Endothelial cell of umbilical vein (primary cell): ENCODE measurements at regions of chr9 and their contacts with region 1.

Region 1: DNA sequence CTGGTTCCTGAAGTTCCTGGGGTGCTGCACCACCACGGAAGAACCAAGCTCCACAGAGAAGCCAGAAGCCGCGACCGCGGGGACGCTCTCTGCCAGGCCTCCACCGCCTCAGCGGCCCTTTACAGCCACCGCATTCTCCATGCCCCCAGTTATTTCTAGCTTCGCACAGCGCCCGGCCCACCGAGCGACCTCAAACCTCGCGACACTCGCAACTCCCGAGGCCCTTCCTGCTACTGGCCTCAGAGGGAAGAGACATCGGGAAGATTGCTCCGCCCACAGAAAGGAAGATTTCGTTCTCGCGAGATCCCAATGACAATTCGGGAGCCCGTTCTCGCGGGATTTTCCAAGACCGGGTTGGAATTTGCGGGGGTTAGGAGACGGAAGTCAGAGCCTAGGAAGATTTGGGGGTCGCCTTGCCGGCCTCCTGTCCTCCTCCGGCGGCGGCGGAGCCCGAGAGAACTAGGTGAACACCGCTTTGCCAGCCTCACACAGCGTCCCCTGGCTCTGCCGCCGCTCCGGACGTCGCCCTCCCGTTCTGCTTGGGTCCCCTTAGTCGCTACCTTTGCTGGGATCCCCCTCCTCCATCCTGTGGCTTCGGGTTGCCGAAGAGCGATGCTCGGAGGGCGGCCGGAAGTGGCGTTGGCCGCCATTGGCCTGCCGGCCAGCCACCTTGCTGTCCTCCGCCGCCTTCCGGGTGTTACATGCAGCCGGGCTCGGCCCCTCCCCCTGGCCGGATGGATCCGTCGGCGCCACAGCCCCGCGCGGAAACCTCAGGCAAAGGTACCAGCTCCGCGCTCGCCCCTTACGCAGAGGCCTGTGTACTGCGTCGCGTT is at the start of gene ERCC6L2:
- DNase-seq: peak; percentile 99
- H3K4me3 ChIP-seq: peak within 1 kb of the TSS in 1 of 3 experiments; percentile 71
- H3K27ac ChIP-seq: no peak within 1 kb of the TSS
- H3K4me1 ChIP-seq: peaks cover 23% of the 10 kb centered on the region
- H3K27me3 ChIP-seq: no peaks in the 10 kb centered on the region
- CTCF ChIP-seq: peak in 1 of 2 donors; percentile 0
- POLR2A ChIP-seq: peak; percentile 86
- total RNA-seq, gene ERCC6L2: 29.6 and 31.8 TPM in 2 replicates

Region 2: GRCh38 chr9:95181226-95181818 is 694.2 kb before region 1 on chr9:
- CTCF ChIA-PET with region 1: no interaction called
- POLR2A ChIA-PET with region 1: no interaction called
- dilution Hi-C with region 1: no loop called
- intact Hi-C with region 1: loop called (anchors 10 kb)
- DNase-seq: peak; percentile 38
- H3K4me3 ChIP-seq: no peak overlapping the region
- H3K27ac ChIP-seq: no peak overlapping the region
- H3K4me1 ChIP-seq: no peaks in the 10 kb centered on the region
- H3K27me3 ChIP-seq: no peaks in the 10 kb centered on the region
- CTCF ChIP-seq: peak; percentile 4 to 15
- POLR2A ChIP-seq: no peak

Region 3: DNA sequence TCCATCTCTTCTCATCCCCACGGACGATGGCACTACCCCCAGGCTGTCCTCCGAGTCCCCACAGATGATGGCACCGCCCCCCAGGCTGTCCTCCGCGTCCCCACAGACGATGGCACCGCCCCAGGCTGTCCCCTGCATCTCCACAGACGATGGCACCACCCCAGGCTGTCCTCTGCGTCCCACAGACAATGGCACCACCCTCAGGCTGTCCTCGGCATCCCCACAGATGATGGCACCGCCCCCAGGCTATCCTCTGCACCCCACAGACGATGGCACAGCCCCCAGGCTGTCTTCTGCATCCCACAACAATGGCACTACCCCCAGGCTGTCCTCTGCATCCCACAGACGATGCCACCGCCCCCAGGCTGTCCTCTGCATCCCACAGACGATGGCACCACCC is 301.3 kb before region 1 on chr9:
- CTCF ChIA-PET with region 1: no interaction called
- POLR2A ChIA-PET with region 1: no interaction called
- dilution Hi-C with region 1: no loop called
- intact Hi-C with region 1: loop called (anchors 5 kb)
- DNase-seq: no peak
- H3K4me3 ChIP-seq: no peak overlapping the region
- H3K27ac ChIP-seq: no peak overlapping the region
- H3K4me1 ChIP-seq: peaks cover 14% of the 10 kb centered on the region
- H3K27me3 ChIP-seq: peaks cover 2 to 5% of the 10 kb centered on the region in 2 experiments
- CTCF ChIP-seq: no peak
- POLR2A ChIP-seq: no peak

Region 4: GRCh38 chr9:95736370-95736769 is 139.2 kb before region 1 on chr9:
- CTCF ChIA-PET with region 1: interaction called, 10 read pairs
- POLR2A ChIA-PET with region 1: no interaction called
- dilution Hi-C with region 1: no loop called
- intact Hi-C with region 1: no loop called
- DNase-seq: no peak
- H3K4me3 ChIP-seq: no peak overlapping the region
- H3K27ac ChIP-seq: no peak overlapping the region
- H3K4me1 ChIP-seq: no peaks in the 10 kb centered on the region
- H3K27me3 ChIP-seq: no peaks in the 10 kb centered on the region
- CTCF ChIP-seq: peak; percentile 27 to 43
- POLR2A ChIP-seq: no peak

Region 5: DNA sequence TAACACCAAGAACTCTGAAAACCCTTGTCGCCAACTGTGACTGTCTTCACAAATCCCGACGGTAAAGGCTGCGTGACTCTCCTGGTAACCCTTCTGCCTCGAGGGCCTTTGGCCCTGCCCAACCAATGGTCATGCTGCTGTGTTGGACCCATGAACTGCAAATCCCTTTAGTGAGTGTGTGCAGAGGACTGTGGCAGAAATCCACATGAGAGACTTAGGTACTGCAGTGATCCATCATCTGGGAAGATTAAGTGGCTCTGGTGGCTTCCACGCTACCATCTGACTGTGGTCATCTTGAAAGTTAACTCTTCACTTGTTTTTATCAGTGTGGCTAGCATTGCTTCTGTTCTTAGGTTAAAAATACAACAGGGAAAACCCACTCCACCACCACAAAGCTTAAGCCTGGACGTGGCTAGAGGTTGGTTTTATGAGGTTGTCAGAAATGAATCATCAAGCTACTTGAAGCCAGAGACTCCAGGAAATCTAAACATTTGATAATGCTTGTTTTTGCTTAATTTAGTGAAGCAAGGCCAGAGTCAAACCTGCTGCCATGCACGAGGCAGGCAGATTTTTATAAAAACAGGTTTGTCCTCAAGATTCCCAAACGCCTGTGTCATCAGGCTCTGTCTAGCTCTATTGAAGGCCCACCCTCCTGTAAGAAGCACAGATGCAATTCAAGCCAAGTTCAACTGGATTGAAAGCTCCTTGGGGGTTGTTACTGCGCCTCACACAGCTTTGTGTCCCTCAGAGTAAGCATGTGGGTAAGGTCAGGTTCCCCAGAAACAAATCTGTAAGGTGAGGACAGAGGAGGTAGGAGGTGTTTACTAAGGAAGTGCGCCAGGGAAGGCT is 52.7 kb before region 1 on chr9:
- CTCF ChIA-PET with region 1: interaction called, 4 read pairs
- POLR2A ChIA-PET with region 1: no interaction called
- dilution Hi-C with region 1: no loop called
- intact Hi-C with region 1: loop called (anchors 1 kb)
- DNase-seq: peak; percentile 79
- H3K4me3 ChIP-seq: no peak overlapping the region
- H3K27ac ChIP-seq: peak overlapping the region; percentile 27
- H3K4me1 ChIP-seq: peaks cover 25% of the 10 kb centered on the region
- H3K27me3 ChIP-seq: no peaks in the 10 kb centered on the region
- CTCF ChIP-seq: no peak
- POLR2A ChIP-seq: no peak

Region 6: GRCh38 chr9:96009690-96010472 is 134.4 kb after region 1 on chr9:
- CTCF ChIA-PET with region 1: no interaction called
- POLR2A ChIA-PET with region 1: no interaction called
- dilution Hi-C with region 1: no loop called
- intact Hi-C with region 1: no loop called
- DNase-seq: no peak
- H3K4me3 ChIP-seq: no peak overlapping the region
- H3K27ac ChIP-seq: no peak overlapping the region
- H3K4me1 ChIP-seq: no peaks in the 10 kb centered on the region
- H3K27me3 ChIP-seq: no peaks in the 10 kb centered on the region
- CTCF ChIP-seq: no peak
- POLR2A ChIP-seq: no peak

Region 7: DNA sequence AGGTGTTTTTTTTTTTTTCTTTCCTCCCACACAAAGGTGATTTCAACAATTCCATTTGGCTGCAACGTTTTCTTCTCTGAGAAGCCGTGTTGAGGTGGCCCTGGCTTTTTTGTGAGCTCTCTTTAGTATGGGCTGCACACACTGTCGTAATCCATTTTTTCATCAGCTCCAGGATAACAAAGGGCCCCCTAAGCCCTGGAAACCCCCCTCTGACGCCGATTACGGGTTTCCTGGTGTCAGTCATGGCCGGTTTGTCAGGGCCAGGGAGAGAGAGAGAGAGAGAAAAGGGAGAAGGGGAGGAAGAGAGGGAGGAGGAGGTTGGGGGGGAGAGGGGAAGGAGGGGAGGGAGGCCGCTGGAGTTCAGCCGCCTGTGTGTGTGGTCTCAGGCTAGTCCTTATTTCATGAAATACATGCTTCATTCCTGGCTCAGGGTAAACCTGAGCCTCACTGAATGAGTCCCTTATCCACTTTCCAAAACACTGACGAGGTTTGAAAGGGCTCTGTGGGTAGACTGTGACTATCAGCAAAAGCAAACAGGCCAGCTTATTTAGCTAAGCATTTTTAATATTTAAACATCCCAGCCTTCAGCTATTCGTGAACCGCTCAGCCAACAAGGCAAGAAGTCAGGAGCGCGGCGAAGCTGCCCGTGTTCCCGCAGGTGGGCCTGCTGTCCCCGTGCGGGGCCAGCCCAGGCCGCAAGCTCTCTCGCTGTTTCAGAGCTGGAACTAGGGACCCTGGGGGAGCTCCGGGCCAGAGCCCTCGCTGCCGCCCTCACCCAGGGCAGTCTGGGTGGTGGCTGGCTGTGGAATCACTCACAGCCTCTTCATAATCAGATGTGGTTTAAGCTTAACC is 172.8 kb after region 1 on chr9:
- CTCF ChIA-PET with region 1: no interaction called
- POLR2A ChIA-PET with region 1: no interaction called
- dilution Hi-C with region 1: no loop called
- intact Hi-C with region 1: no loop called
- DNase-seq: peak; percentile 55
- H3K4me3 ChIP-seq: no peak overlapping the region
- H3K27ac ChIP-seq: no peak overlapping the region
- H3K4me1 ChIP-seq: no peaks in the 10 kb centered on the region
- H3K27me3 ChIP-seq: no peaks in the 10 kb centered on the region
- CTCF ChIP-seq: no peak
- POLR2A ChIP-seq: no peak

Region 8: DNA sequence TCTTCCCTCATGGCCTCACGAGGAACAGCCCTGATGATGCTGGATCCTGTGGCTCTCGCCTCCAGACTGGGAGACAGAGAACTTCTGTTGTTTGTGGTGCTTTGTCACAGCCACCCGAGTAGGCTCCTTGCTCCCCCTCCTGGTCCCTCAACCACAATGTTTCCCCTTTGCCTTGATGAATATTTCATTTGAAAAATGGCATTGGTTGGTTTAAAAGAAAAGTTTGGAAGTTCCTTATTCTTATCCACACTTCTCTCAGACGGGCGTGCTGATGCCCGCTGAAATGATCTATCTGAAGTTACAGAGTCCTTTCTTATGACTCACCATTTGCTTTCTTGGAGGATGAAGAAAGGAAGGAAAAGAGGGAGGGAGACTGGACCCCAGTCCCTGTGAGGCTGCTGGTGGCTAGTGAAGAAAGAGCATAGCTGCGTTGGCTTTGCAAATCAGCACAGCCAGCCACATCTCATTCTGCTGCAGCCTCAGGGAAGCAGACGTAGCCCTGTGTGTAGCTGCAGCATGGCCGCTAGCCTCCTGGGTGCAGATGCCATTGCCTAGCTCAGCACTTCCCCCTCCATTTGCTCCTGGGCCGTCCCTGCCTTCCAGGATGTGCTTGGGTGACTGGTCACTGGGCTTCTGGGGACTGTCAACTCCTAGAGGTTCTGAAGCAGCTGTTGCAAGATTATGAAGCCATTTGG is 185.9 kb after region 1 on chr9:
- CTCF ChIA-PET with region 1: interaction called, 3 read pairs
- POLR2A ChIA-PET with region 1: no interaction called
- dilution Hi-C with region 1: no loop called
- intact Hi-C with region 1: loop called (anchors 5 kb)
- DNase-seq: peak; percentile 65
- H3K4me3 ChIP-seq: no peak overlapping the region
- H3K27ac ChIP-seq: no peak overlapping the region
- H3K4me1 ChIP-seq: peaks cover 9% of the 10 kb centered on the region
- H3K27me3 ChIP-seq: no peaks in the 10 kb centered on the region
- CTCF ChIP-seq: peak; percentile 55 to 57
- POLR2A ChIP-seq: no peak

Region 9: DNA sequence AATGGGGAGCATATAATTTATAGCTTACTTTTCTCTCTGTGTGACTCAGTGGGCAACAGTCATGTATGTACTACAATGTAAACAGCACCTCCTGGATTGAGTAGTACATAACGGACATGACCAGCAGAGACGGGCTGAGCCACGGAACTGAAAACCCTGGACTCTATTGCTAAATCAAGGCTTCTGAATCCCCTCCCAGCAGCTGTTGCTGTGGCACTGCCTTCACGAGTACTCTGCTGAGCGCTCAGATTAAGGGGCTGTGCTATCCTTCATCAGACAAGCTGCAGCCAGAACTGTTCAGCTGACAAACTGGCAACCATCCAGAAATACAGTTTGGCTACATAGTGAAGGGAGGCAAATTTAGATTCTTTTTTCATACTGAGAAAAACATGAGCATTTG is 1300.7 kb after region 1 on chr9:
- CTCF ChIA-PET with region 1: no interaction called
- POLR2A ChIA-PET with region 1: no interaction called
- dilution Hi-C with region 1: no loop called
- intact Hi-C with region 1: no loop called
- DNase-seq: no peak
- H3K4me3 ChIP-seq: no peak overlapping the region
- H3K27ac ChIP-seq: no peak overlapping the region
- H3K4me1 ChIP-seq: no peaks in the 10 kb centered on the region
- H3K27me3 ChIP-seq: no peaks in the 10 kb centered on the region
- CTCF ChIP-seq: no peak
- POLR2A ChIP-seq: no peak